ENCODE measurements at regions of chr5 and their contacts with region 1.

Region 1: DNA sequence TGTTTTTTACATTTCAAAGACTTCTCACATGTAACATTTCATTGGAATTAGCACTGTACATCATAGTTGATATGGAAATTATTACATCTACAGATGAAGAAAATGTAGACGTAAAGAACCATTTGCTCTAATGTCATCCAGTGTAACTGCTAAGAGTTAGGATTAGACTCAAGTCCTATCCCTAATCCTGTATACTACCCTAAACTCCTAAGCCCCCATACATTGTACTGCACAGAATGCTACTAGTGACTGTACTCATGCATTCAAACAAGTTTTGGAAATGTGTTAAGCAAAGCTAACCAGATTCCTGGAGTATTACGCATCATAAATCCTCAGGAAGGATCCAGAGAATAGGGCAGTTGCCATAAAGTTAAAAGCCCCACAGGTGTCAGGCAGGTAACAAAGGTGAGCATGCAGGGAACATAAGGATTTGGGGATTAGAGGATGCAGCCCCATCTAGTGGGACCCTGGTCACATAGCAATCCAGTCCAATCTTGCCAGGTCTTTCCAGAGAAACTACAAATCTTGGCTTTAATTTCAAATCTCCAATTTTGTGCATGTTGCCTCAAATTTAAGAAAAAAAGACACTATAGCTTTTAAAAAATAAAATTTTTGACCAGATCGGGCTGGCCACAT is 32.0 kb downstream of the HAVCR1 start:
- DNase-seq: no peak
- H3K4me3 Mint-ChIP-seq: no peak overlapping the region
- H3K27ac Mint-ChIP-seq: peak overlapping the region; percentile 89
- H3K4me1 Mint-ChIP-seq: peaks cover 85% of the 10 kb centered on the region
- H3K27me3 Mint-ChIP-seq: no peaks in the 10 kb centered on the region

Region 2: DNA sequence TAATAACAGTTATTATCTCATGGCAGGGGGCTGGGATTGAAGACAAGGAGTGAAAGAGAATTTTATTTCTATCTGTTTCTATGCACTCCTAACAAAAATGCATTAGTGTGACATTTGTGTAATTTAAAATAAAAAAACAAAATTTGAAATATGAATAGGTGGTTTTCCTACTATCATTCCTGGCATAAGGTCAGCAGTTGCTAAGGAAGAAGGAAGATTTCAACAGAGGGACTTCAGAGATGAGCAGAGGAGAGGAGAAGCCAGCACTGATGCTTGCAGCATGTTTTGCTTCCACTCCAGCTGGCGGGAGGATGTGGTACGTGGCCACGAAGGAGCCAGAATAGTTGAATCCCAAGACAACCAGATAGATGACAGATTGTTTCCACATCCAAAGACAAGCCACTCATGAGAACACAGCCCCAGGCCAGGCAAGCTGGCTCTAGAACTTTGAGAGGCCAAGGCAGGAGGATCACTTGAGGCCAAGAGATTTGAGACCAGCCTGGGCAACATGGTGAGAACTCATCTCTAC is 79.0 kb before region 1 on chr5:
- intact Hi-C with region 1: loop called (anchors 2 kb)
- DNase-seq: peak; percentile 39
- H3K4me3 Mint-ChIP-seq: no peak overlapping the region
- H3K27ac Mint-ChIP-seq: no peak overlapping the region
- H3K4me1 Mint-ChIP-seq: peaks cover 23% of the 10 kb centered on the region
- H3K27me3 Mint-ChIP-seq: no peaks in the 10 kb centered on the region

Region 3: DNA sequence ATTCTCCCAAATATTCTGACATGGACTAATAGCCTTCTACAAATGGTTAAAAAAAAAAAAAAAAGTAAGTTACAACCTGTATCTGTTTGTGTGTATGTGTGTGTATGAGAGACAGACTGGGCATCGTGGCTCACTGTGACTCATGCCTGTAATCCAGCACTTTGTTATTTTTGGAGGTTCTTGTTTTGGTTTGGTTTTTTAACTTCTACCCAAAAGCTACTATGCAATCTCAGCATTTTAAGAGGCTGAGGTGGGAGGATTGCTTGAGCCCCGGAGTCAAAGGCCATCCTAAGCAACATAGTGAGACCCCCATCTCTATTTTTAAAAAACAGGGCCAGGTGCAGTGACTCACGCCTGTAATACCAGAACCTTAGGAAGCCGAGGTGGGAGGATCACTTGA is 49.7 kb after region 1 on chr5:
- intact Hi-C with region 1: loop called (anchors 1 kb)
- DNase-seq: no peak
- H3K4me3 Mint-ChIP-seq: no peak overlapping the region
- H3K27ac Mint-ChIP-seq: no peak overlapping the region
- H3K4me1 Mint-ChIP-seq: peaks cover 37% of the 10 kb centered on the region
- H3K27me3 Mint-ChIP-seq: no peaks in the 10 kb centered on the region

Region 4: DNA sequence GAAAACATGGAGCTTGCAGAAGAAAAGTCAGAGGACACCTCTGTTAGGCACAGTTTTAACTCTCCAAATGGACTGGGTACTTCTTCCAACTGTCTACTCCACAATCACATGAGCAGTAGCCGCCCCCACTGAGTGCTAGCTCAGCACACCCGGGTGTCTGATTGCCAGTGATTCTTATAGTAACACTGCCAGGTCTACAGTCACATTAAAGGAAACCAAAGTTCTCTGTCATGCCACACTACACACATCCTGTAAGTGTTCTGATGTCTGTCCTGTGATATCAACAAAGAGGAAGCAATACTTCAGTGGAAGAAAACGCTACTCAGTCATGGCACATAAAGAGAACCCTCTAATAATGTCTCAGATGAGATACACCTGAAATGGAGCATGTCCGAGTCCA is 82.1 kb after region 1 on chr5 and contains the start of gene HAVCR2:
- intact Hi-C with region 1: loop called (anchors 1 kb)
- DNase-seq: peak; percentile 63
- H3K4me3 Mint-ChIP-seq: peak within 1 kb of the TSS; percentile 88
- H3K27ac Mint-ChIP-seq: peak within 1 kb of the TSS; percentile 99
- H3K4me1 Mint-ChIP-seq: peaks cover 57% of the 10 kb centered on the region
- H3K27me3 Mint-ChIP-seq: no peaks in the 10 kb centered on the region
- total RNA-seq, gene HAVCR2: 48.6 and 50.5 TPM in 2 replicates

Region 5: DNA sequence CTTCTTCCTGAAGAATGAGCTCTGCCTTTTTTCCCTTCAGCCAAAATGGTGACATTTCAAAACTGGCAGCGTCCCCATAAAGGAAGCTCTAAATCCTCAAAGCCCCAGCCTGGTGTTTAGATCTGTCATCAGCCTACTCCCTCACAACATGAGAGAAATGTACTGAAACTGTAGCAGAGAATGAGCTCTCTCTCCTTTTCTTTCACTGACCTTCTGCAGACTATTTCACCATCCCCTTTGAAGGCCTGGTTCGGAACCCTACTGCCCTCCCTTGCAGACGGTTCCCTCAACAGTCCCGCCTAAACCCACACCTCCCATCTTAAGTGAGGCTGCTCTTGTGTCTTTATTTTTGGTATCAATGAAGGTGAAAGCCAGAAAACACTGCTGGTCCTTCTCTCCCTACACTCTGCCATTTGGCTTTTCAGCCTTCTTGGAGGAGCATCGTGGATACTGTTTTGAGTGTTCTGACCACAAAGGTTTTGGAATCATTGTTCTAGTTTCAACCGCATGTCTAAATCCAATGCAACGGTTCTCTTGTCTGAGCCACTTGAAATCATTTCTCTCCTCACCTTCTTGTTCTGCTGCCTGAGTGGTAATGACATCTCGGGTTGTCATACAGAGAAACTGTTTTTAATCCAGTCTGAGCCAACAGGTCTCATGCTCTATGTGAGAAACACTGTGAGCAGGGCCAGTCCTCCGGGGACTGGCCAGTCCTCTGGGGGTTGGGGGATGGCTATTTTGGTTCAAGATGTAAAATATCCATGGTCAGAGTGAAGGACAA is 192.8 kb after region 1 on chr5:
- intact Hi-C with region 1: loop called (anchors 5 kb)
- DNase-seq: no peak
- H3K4me3 Mint-ChIP-seq: peak overlapping the region; percentile 40
- H3K27ac Mint-ChIP-seq: peak overlapping the region; percentile 94
- H3K4me1 Mint-ChIP-seq: peaks cover 79% of the 10 kb centered on the region
- H3K27me3 Mint-ChIP-seq: no peaks in the 10 kb centered on the region

Region 6: GRCh38 chr5:157603333-157604190 is 576.7 kb after region 1 on chr5:
- intact Hi-C with region 1: loop called (anchors 5 kb)
- DNase-seq: peak; percentile 75
- H3K4me3 Mint-ChIP-seq: peak overlapping the region; percentile 52
- H3K27ac Mint-ChIP-seq: peak overlapping the region; percentile 80
- H3K4me1 Mint-ChIP-seq: peaks cover 79% of the 10 kb centered on the region
- H3K27me3 Mint-ChIP-seq: no peaks in the 10 kb centered on the region

Measured in activated T-helper 2 cell treated with anti-CD3 and anti-CD28 coated beads, Interferon-gamma antibody, Interleukin-2, Interleukin-4, amounts not matched to agents 10 μg/mL and 5 μg/mL and 100 μg/mL, durations not matched to agents 14 hours and 24 hours and 36 hours (primary cell).